Transverse colon (tissue), 4 donors: ENCODE measurements at regions of chr17 and their contacts with region 1.

Region 1: DNA sequence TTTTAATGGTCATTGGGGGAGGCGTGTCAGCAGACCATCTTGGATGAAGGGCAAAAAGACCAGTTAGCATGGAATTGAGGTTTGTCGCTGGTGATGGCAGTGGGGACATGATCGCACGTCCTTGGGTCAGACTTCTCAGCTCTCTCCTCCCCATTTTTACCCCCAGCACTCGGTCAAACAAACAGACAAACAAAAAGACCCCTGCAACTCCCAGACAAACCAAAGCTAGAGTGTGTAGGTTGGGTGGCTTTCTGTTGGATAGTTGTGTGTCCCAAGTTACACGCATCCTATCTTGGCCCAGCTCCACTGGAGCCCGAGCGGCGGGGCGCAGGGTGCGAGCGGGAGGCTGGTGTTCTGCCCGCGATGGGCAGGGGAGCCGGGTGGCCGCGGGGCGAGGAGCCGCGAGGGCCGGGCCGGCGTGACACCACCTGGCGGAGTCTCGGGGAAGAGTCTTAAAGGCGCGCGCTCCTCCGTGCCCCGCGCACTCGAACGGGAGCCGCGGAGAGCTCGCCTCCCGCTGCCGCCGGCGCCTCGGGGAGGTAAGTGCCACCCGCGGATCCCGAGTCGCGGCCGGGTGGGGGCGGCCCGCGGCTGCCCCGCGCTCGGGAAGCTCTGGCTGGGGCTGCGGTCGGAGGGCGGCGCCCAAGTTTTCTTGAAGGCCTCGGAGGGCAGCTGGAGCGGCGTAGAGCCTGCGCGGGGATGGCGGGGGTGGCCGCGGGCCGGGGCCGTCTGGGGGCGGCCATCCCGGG is 18.5 kb upstream of the NTN1 start:
- DNase-seq: no peak
- H3K4me3 ChIP-seq: peak overlapping the region; percentile 41 to 47 (median 46)
- H3K27ac ChIP-seq: peak overlapping the region in 2 of 4 donors; percentile 48 to 50
- H3K4me1 ChIP-seq: peaks cover 4 to 23% (median 10%) of the 10 kb centered on the region in 4 donors
- H3K27me3 ChIP-seq: peaks cover 75% of the 10 kb centered on the region
- CTCF ChIP-seq: peak in 3 of 5 experiments; percentile 21 to 40 (median 33)
- EP300 ChIP-seq: no peak
- POLR2A ChIP-seq: no peak

Region 2: GRCh38 chr17:8916466-8916865 is 86.3 kb before region 1 on chr17:
- in situ Hi-C with region 1: no loop called
- intact Hi-C with region 1: no loop called
- DNase-seq: no peak
- H3K4me3 ChIP-seq: no peak overlapping the region
- H3K27ac ChIP-seq: peak overlapping the region in 2 of 4 donors; percentile 17 to 40
- H3K4me1 ChIP-seq: no peaks in the 10 kb centered on the region
- H3K27me3 ChIP-seq: no peaks in the 10 kb centered on the region
- CTCF ChIP-seq: no peak
- EP300 ChIP-seq: no peak
- POLR2A ChIP-seq: no peak

Region 3: GRCh38 chr17:9239793-9240658 is 237.2 kb after region 1 on chr17:
- in situ Hi-C with region 1: no loop called
- intact Hi-C with region 1: loop called (anchors 10 kb)
- DNase-seq: peak; percentile 78
- H3K4me3 ChIP-seq: peak overlapping the region; percentile 38 to 54 (median 47)
- H3K27ac ChIP-seq: peak overlapping the region; percentile 90 to 95 (median 94)
- H3K4me1 ChIP-seq: peaks cover 10 to 43% (median 29%) of the 10 kb centered on the region in 4 donors
- H3K27me3 ChIP-seq: no peaks in the 10 kb centered on the region
- CTCF ChIP-seq: no peak
- EP300 ChIP-seq: no peak
- POLR2A ChIP-seq: peak; percentile 61